ENCODE measurements at regions of chr6 and their contacts with region 1.

Region 1: GRCh38 chr6:38639498-38640215 is at the start of gene BTBD9:
- DNase-seq: peak; percentile 83
- ATAC-seq: peak; percentile 80
- H3K4me3 ChIP-seq: peak within 1 kb of the TSS; percentile 86
- H3K27ac ChIP-seq: peak within 1 kb of the TSS; percentile 47
- H3K4me1 ChIP-seq: peaks cover 9% of the 10 kb centered on the region; the same call in 1 of the 2 replicates
- H3K27me3 ChIP-seq: no peaks in the 10 kb centered on the region
- CTCF ChIP-seq: no peak
- total RNA-seq, gene BTBD9: 4.3 and 5.5 TPM in 2 replicates

Region 2: GRCh38 chr6:38027685-38028373 is 611.8 kb before region 1 on chr6:
- CTCF ChIA-PET with region 1: no interaction called
- POLR2A ChIA-PET with region 1: interaction called, 12 read pairs
- intact Hi-C with region 1: no loop called
- DNase-seq: no peak
- ATAC-seq: no peak
- H3K4me3 ChIP-seq: no peak overlapping the region
- H3K27ac ChIP-seq: no peak overlapping the region
- H3K4me1 ChIP-seq: no peaks in the 10 kb centered on the region
- H3K27me3 ChIP-seq: no peaks in the 10 kb centered on the region
- CTCF ChIP-seq: no peak

Region 3: GRCh38 chr6:38973178-38974054 is 333.8 kb after region 1 on chr6:
- CTCF ChIA-PET with region 1: no interaction called
- POLR2A ChIA-PET with region 1: no interaction called
- intact Hi-C with region 1: no loop called
- DNase-seq: peak; percentile 87
- ATAC-seq: peak; percentile 92
- H3K4me3 ChIP-seq: no peak overlapping the region
- H3K27ac ChIP-seq: no peak overlapping the region
- H3K4me1 ChIP-seq: peaks cover 17% of the 10 kb centered on the region
- H3K27me3 ChIP-seq: peaks cover 35% of the 10 kb centered on the region
- CTCF ChIP-seq: peak; percentile 89

Region 4: DNA sequence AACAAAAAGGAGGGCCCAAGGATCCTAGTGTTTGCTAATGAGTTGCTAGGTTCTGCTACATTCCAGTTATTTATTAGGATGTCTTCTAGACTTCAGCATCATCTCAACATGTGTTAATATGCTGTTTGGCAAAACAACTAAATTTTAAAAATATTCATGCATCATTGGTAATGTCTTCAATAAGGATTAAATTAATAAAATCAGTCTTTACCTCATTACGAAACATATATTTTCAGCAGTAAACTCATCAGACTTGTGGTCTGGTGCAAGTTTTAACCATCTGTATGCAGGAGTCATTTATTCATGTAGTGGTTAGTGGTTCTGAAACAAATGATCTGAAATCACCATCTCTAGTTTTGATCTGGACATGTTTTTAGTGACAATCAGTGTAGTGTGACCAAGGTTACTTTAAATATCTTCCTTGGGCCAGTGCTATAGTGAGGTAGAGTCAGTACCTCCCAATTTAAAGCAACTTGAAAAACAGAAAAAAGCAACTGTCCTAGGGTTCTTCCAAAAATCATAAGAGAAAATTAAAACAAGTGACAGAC is 767.9 kb after region 1 on chr6:
- CTCF ChIA-PET with region 1: no interaction called
- POLR2A ChIA-PET with region 1: no interaction called
- intact Hi-C with region 1: no loop called
- DNase-seq: no peak
- ATAC-seq: no peak
- H3K4me3 ChIP-seq: no peak overlapping the region
- H3K27ac ChIP-seq: no peak overlapping the region
- H3K4me1 ChIP-seq: no peaks in the 10 kb centered on the region
- H3K27me3 ChIP-seq: no peaks in the 10 kb centered on the region
- CTCF ChIP-seq: no peak